HEK293T (cell line): ENCODE measurements at regions of chr11 and their contacts with region 1.

Region 1: DNA sequence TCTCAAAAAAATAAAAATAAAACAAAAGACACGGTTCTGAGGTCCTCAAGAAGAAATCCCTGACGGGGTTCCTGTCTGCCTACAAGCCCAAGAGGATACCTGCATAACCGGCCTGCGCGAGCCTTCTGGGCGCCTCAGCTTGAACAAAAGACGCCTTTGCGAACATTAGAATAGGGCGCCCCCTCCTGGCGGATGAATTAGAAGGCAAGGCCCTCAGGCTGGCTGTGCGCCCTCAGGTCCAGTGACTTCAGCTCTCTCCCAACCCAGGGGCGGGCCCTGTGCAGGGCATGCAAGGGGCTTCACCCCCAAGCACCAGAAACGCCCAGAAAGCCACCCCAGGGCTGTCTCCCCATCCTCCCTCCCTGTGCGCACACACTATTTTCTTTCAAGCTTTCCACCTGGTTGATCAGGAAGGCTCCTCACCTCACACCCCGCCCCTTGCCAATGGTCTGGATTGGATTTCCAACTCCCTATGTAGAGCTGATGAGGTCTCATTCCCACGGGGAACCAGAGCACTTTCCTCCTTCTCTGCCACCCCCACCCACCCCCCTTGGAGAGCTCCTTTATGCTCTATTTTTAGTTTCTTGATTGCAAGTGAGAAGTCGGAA is 273.3 kb downstream of the BUD13 start:
- DNase-seq: peak; percentile 83

Region 2: DNA sequence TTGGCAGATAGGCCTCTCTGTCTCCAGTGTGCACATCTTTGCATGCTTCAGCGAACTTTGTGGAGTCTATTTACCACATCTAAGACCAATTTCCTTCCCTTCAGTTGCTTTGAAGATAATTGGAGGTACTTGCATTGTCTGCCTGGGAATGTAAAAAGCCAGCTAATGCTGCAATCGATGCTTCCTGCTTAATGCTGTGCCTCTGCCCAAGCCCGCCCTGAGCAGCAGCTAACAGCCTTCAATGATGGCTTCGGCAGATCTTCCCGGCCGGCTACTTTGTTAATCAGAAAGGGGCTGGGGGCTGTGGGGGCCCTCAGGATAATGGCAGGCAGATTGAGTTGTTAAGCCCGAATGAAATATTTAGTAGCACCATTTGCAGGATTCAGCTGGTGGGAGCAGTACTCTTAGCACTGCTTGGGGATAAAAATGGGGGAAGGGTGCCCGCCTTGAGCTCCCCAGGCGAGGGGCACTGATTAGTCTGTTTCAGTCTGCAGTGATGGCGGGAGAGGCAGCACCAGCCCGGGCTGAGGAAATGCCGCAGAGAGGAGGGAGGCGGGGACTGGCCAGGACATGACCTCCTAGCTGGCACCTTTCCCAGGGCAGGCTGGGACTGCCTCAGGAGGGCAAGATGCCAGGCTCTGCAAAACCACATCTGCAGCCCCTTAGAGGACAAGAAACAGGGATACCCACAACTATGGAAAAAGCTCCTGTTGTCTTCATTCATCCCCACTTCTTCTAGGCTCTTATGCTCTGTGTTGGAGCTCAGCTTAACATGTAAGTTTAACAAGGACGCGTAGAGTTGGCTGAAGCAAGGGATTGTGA is 186.7 kb before region 1 on chr11:
- CTCF ChIA-PET with region 1: no interaction called
- POLR2A ChIA-PET with region 1: no interaction called
- DNase-seq: no peak

Region 3: DNA sequence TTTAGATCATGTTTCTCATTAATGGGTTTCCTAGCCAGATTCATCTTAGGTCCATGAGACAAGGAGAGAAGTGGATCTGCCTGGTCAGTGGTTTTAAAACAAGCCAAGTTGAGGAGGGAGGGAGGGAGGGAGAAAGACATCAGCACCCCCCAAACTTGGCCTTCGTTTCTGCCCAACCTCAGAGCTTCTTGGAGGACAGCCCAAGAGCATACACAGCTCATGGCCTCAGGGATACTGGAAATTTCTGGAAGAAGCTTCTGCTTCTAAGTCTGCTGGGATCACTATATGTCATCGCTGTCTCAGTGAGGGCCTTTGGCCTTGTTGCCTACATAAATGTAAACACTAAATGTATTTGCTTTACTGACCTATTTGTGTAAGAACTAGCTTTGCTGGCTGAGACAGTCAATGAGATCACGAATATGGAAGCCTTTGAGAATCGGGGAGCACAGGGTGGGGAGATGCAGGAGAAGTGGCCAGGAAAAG is 101.9 kb before region 1 on chr11:
- CTCF ChIA-PET with region 1: no interaction called
- POLR2A ChIA-PET with region 1: no interaction called
- DNase-seq: no peak

Region 4: GRCh38 chr11:116439361-116439677 is 60.2 kb before region 1 on chr11:
- CTCF ChIA-PET with region 1: no interaction called
- POLR2A ChIA-PET with region 1: no interaction called
- DNase-seq: no peak

Region 5: GRCh38 chr11:116454020-116454645 is 45.4 kb before region 1 on chr11:
- CTCF ChIA-PET with region 1: interaction called, 18 read pairs
- POLR2A ChIA-PET with region 1: no interaction called
- DNase-seq: peak; percentile 69

Region 6: DNA sequence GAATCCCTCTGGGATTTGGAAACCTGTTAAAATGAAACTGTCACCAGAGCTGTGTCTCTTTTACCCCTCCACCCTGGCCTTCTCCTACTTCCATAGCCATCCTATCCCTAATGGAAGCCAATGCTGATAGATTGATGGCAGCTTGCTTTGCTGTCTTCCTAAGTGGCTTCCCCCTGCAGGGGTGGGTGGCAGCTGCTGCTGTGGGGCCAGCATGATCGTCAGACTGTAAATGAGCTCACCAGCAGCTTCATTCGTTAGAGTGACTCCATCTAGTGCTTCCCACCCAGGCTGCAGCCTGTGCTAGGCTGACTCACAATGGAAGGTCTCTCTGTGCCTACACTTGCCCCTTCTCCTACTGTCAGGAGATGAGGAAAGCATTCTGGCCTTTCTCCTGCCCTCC is 37.7 kb before region 1 on chr11:
- CTCF ChIA-PET with region 1: interaction called, 10 read pairs
- POLR2A ChIA-PET with region 1: no interaction called
- DNase-seq: peak; percentile 53

Region 7: GRCh38 chr11:116563028-116563711 is 63.7 kb after region 1 on chr11:
- CTCF ChIA-PET with region 1: no interaction called
- POLR2A ChIA-PET with region 1: no interaction called
- DNase-seq: no peak